Tibial artery (tissue), 4 donors: ENCODE measurements at regions of chr1 and their contacts with region 1.

Region 1: DNA sequence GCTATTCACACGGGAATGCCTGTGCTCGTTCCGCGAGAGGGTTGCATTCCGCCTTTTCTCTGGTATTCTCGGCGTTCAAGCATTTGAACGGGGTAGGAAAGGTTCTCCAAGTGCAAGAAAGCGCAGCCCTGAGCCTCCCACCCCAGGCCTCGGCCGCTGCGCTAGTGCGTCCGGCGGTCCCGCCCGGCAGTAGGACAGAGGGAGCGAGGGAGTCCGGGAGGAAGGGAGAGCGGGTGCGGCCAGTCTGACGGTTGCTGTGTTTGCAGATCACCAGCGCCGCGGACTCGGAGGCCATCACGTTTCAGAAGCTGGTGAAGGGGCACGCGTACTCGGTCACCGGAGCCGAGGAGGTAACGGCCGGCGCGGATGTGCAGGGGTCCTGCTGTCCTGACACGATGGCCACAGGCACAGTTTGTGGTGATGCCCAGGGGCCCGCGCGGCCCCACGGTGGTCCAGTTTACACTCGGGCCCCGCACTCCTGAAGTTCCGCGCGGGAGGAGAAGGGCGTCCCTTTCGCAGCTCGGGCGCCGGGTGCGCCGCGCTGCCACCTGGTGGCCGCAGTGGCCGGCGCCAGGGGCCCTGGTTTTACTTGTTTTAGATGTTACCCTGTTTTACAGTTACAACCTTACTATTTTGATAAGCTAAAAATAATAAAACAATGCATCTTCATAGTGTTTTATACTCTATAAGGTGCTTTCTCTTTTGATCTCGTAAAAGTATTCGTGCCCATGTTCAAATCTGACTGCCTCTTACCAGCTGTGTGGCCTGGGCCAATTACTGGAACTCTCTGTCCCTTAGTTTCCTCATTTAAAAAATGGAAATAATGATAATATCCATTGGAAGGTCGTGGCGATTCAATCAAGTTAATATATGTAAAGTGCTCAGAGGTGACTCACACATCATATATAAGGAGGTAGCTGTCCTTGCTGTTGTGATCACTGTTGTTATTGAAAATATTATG is 36.7 kb downstream of the CAPN2 start:
- DNase-seq: peak; percentile 65 to 83
- H3K4me3 ChIP-seq: peak overlapping the region; percentile 50 to 54
- H3K27ac ChIP-seq: peak overlapping the region; percentile 62 to 78
- H3K4me1 ChIP-seq: peaks cover 0 to 16% (median 12%) of the 10 kb centered on the region in 4 donors
- H3K27me3 ChIP-seq: no peaks in the 10 kb centered on the region
- CTCF ChIP-seq: peak; percentile 94 to 98

Region 2: GRCh38 chr1:223700942-223701637 is 48.0 kb before region 1 on chr1:
- intact Hi-C with region 1: loop called (anchors 2 kb)
- DNase-seq: peak; percentile 51 to 84
- H3K4me3 ChIP-seq: peak overlapping the region; percentile 30 to 38
- H3K27ac ChIP-seq: peak overlapping the region; percentile 86 to 89
- H3K4me1 ChIP-seq: peaks cover 0 to 76% (median 48%) of the 10 kb centered on the region in 4 donors
- H3K27me3 ChIP-seq: no peaks in the 10 kb centered on the region
- CTCF ChIP-seq: no peak

Region 3: DNA sequence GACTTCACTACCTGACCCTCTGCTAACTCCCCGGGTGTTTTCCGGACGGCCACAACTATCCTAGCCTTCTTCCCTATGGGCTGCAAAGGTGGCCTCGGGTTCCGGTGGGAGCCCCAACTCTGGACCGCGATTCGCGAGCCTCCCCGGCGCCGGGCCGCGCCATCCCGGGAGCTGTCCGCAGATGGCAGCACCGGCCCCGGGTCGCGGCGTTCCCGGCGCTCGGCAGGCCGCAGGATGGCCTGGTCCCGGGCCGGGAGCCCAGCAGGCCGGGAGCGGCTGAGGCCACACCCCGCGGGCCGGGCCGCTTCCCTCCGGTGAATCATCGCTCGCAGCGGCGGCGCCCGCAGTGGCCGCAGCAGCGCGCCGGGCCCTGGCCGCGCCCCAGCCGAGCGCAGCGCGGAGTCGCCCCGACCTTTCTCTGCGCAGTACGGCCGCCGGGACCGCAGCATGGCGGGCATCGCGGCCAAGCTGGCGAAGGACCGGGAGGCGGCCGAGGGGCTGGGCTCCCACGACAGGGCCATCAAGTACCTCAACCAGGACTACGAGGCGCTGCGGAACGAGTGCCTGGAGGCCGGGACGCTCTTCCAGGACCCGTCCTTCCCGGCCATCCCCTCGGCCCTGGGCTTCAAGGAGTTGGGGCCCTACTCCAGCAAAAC is 36.7 kb before region 1 on chr1 and contains the start of gene CAPN2:
- intact Hi-C with region 1: loop called (anchors 2 kb)
- DNase-seq: peak; percentile 75 to 92
- H3K4me3 ChIP-seq: peak within 1 kb of the TSS; percentile 66 to 71
- H3K27ac ChIP-seq: peak within 1 kb of the TSS; percentile 85 to 90
- H3K4me1 ChIP-seq: peaks cover 0 to 67% (median 53%) of the 10 kb centered on the region in 4 donors
- H3K27me3 ChIP-seq: no peaks in the 10 kb centered on the region
- CTCF ChIP-seq: peak; percentile 81 to 89

Region 4: DNA sequence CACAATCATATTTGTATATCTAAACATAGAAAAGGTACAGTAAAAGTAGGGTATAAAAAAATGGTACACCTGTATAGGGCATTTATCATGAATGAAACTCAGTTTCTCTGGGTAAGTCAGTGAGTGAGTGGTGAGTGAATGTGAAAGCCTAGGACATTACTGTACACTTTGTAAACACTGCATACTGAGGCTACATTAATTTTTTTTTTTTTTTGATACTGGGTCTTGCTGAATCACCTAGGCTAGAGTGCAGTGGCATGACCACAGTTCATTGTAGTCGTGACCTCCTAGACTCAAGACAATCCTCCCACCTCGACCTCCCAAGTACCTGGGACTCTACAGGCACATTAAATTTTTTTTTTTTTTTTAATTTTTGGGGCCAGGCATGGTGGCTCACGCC is 392.6 kb after region 1 on chr1:
- intact Hi-C with region 1: no loop called
- DNase-seq: no peak
- H3K4me3 ChIP-seq: no peak overlapping the region
- H3K27ac ChIP-seq: no peak overlapping the region
- H3K4me1 ChIP-seq: no peaks in the 10 kb centered on the region
- H3K27me3 ChIP-seq: no peaks in the 10 kb centered on the region
- CTCF ChIP-seq: no peak

Region 5: GRCh38 chr1:224168859-224169380 is 419.9 kb after region 1 on chr1:
- intact Hi-C with region 1: no loop called
- DNase-seq: peak in 1 of 2 donors; percentile 66
- H3K4me3 ChIP-seq: no peak overlapping the region
- H3K27ac ChIP-seq: peak overlapping the region; percentile 44 to 54
- H3K4me1 ChIP-seq: peaks cover 0 to 22% (median 12%) of the 10 kb centered on the region in 4 donors
- H3K27me3 ChIP-seq: no peaks in the 10 kb centered on the region
- CTCF ChIP-seq: no peak

Region 6: GRCh38 chr1:224203243-224204016 is 454.4 kb after region 1 on chr1:
- intact Hi-C with region 1: no loop called
- DNase-seq: peak; percentile 61 to 82
- H3K4me3 ChIP-seq: no peak overlapping the region
- H3K27ac ChIP-seq: no peak overlapping the region
- H3K4me1 ChIP-seq: peaks cover 0 to 25% (median 12%) of the 10 kb centered on the region in 4 donors
- H3K27me3 ChIP-seq: no peaks in the 10 kb centered on the region
- CTCF ChIP-seq: no peak